SK-N-SH (cell line): ENCODE measurements at regions of chr3 and their contacts with region 1.

Region 1: GRCh38 chr3:97719156-97719821 is 45.3 kb upstream of the ARL6 start:
- DNase-seq: peak; percentile 60
- H3K4me3 ChIP-seq: peak overlapping the region in 1 of 2 experiments; percentile 38; a peak in 1 of 4 replicates
- H3K27ac ChIP-seq: no peak overlapping the region
- H3K4me1 ChIP-seq: peaks cover 0 to 2% of the 10 kb centered on the region in 2 experiments; a peak in 2 of 4 replicates
- H3K27me3 ChIP-seq: no peaks in the 10 kb centered on the region
- CTCF ChIP-seq: peak; percentile 97
- EP300 ChIP-seq: no peak
- RAD21 ChIP-seq: peak; percentile 92

Region 2: GRCh38 chr3:96863129-96863740 is 856.1 kb before region 1 on chr3:
- CTCF ChIA-PET with region 1: interaction called, 41 read pairs
- POLR2A ChIA-PET with region 1: no interaction called
- DNase-seq: peak; percentile 10
- H3K4me3 ChIP-seq: no peak overlapping the region; a peak in 1 of 4 replicates
- H3K27ac ChIP-seq: no peak overlapping the region
- H3K4me1 ChIP-seq: no peaks in the 10 kb centered on the region
- H3K27me3 ChIP-seq: no peaks in the 10 kb centered on the region
- CTCF ChIP-seq: peak; percentile 75
- EP300 ChIP-seq: no peak
- RAD21 ChIP-seq: peak; percentile 89

Region 3: DNA sequence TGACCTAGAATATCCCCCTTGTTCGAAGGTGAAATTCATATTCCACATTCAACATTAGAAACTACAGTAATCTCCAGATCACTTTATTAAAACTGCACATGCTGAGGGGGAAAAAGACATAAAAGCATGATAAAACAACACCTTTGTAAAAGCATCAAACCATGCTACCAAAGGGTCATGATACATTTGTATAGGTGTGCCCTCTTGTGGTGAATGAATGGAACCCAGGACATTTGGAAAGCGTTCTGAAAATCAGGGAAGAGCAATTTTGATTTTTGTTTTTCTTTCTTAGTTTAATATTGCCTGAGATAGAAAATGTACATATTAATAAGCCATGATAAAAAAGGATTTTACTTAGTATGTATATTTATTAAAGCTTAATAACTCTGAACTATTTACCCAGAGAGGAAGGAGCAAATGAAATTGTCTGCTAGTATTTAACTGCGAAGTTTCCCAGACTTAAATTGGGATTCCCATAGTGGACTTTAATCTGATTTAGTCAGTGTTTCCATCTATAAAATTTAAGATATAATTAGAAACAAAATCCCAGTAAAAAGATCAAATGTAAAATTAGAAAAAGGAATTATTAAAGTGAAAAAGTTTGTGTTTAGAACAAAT is 60.5 kb before region 1 on chr3:
- CTCF ChIA-PET with region 1: interaction called, 15 read pairs
- POLR2A ChIA-PET with region 1: no interaction called
- DNase-seq: peak; percentile 20
- H3K4me3 ChIP-seq: no peak overlapping the region; a peak in 1 of 4 replicates
- H3K27ac ChIP-seq: no peak overlapping the region
- H3K4me1 ChIP-seq: no peaks in the 10 kb centered on the region; a peak in 1 of 4 replicates
- H3K27me3 ChIP-seq: no peaks in the 10 kb centered on the region
- CTCF ChIP-seq: peak; percentile 75
- EP300 ChIP-seq: no peak
- RAD21 ChIP-seq: peak; percentile 82

Region 4: GRCh38 chr3:97694876-97695275 is 24.4 kb before region 1 on chr3:
- CTCF ChIA-PET with region 1: interaction called, 16 read pairs
- POLR2A ChIA-PET with region 1: no interaction called
- DNase-seq: no peak
- H3K4me3 ChIP-seq: no peak overlapping the region
- H3K27ac ChIP-seq: no peak overlapping the region
- H3K4me1 ChIP-seq: peaks cover 0 to 4% of the 10 kb centered on the region in 2 experiments; a peak in 1 of 4 replicates
- H3K27me3 ChIP-seq: no peaks in the 10 kb centered on the region
- CTCF ChIP-seq: no peak
- EP300 ChIP-seq: no peak
- RAD21 ChIP-seq: no peak

Region 5: GRCh38 chr3:97705764-97706163 is 13.5 kb before region 1 on chr3:
- CTCF ChIA-PET with region 1: interaction called, 14 read pairs
- POLR2A ChIA-PET with region 1: no interaction called
- DNase-seq: no peak
- H3K4me3 ChIP-seq: no peak overlapping the region
- H3K27ac ChIP-seq: no peak overlapping the region
- H3K4me1 ChIP-seq: no peaks in the 10 kb centered on the region
- H3K27me3 ChIP-seq: no peaks in the 10 kb centered on the region
- CTCF ChIP-seq: no peak
- EP300 ChIP-seq: no peak
- RAD21 ChIP-seq: no peak

Region 6: GRCh38 chr3:97736928-97737327 is 17.6 kb after region 1 on chr3:
- CTCF ChIA-PET with region 1: interaction called, 22 read pairs
- POLR2A ChIA-PET with region 1: no interaction called
- DNase-seq: no peak
- H3K4me3 ChIP-seq: no peak overlapping the region
- H3K27ac ChIP-seq: peak overlapping the region in 1 of 2 experiments; percentile 80; a peak in 1 of 4 replicates
- H3K4me1 ChIP-seq: peaks cover 0 to 2% of the 10 kb centered on the region in 2 experiments; a peak in 2 of 4 replicates
- H3K27me3 ChIP-seq: no peaks in the 10 kb centered on the region
- CTCF ChIP-seq: no peak
- EP300 ChIP-seq: peak in 1 of 2 experiments; percentile 37; a peak in 1 of 4 replicates
- RAD21 ChIP-seq: no peak